Activated naive CD4-positive, alpha-beta T cell treated with anti-CD3 and anti-CD28 coated beads for 36 hours (primary cell): ENCODE measurements at regions of chr9 and their contacts with region 1.

Region 1: GRCh38 chr9:75088260-75088905 is at the start of gene OSTF1:
- DNase-seq: peak; percentile 93
- H3K4me3 Mint-ChIP-seq: peak within 1 kb of the TSS; percentile 95
- H3K27ac Mint-ChIP-seq: peak within 1 kb of the TSS; percentile 94
- H3K4me1 Mint-ChIP-seq: peaks cover 61% of the 10 kb centered on the region
- H3K27me3 Mint-ChIP-seq: no peaks in the 10 kb centered on the region
- total RNA-seq, gene OSTF1: 102 to 104 TPM

Region 2: GRCh38 chr9:73149371-73150067 is 1938.9 kb before region 1 on chr9:
- CTCF ChIA-PET with region 1: no interaction called
- intact Hi-C with region 1: loop called (anchors 5 kb)
- DNase-seq: peak; percentile 23
- H3K4me3 Mint-ChIP-seq: peak overlapping the region; percentile 28
- H3K27ac Mint-ChIP-seq: peak overlapping the region; percentile 79
- H3K4me1 Mint-ChIP-seq: peaks cover 55% of the 10 kb centered on the region
- H3K27me3 Mint-ChIP-seq: no peaks in the 10 kb centered on the region

Region 3: DNA sequence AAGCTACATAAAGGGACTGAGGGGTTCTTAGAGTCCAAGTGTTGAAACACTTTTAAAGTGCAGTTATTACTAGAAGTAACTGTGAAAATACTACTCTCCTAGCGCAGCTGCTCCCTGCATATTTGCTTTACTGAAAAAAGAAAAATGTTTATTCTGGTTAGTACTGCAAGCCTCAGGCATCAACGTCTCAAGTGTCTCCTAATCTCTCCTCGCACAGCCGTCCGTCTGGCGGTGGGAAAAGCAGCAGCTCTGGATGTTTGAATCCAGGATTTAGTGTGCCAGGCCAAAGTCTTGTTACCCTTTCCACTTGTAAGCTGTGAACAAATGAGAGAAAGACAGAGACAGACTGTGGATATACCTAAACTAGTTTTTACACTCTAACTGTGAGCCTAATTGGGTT is 560.2 kb before region 1 on chr9:
- CTCF ChIA-PET with region 1: no interaction called
- intact Hi-C with region 1: no loop called
- DNase-seq: no peak
- H3K4me3 Mint-ChIP-seq: no peak overlapping the region
- H3K27ac Mint-ChIP-seq: no peak overlapping the region
- H3K4me1 Mint-ChIP-seq: no peaks in the 10 kb centered on the region
- H3K27me3 Mint-ChIP-seq: peaks cover 3% of the 10 kb centered on the region

Region 4: DNA sequence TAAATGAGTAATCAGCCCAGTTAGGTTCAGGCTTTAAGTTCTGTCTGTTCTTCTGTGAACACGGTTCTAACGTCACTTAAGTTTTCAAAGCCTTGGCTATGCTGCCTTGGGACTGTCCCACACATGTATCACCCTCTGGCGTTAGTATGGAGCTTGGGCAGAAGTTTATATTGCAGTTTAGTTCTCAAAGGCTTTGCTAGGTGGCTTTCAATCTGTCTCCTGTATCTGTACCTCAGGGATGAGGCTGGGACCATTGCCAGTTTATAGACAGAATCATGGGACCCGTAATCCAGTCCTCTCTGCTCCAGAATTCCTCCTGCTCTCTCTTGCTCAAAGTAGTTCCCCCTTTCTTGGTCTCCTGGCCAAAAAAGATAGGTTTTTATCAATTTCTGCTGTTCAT is 147.8 kb before region 1 on chr9:
- CTCF ChIA-PET with region 1: no interaction called
- intact Hi-C with region 1: no loop called
- DNase-seq: no peak
- H3K4me3 Mint-ChIP-seq: no peak overlapping the region
- H3K27ac Mint-ChIP-seq: no peak overlapping the region
- H3K4me1 Mint-ChIP-seq: peaks cover 9% of the 10 kb centered on the region
- H3K27me3 Mint-ChIP-seq: no peaks in the 10 kb centered on the region

Region 5: GRCh38 chr9:75071530-75072124 is 16.8 kb before region 1 on chr9:
- CTCF ChIA-PET with region 1: interaction called, 7 read pairs
- intact Hi-C with region 1: loop called (anchors 1 kb)
- DNase-seq: peak; percentile 90
- H3K4me3 Mint-ChIP-seq: peak overlapping the region; percentile 0
- H3K27ac Mint-ChIP-seq: peak overlapping the region; percentile 79
- H3K4me1 Mint-ChIP-seq: peaks cover 41% of the 10 kb centered on the region
- H3K27me3 Mint-ChIP-seq: no peaks in the 10 kb centered on the region

Region 6: DNA sequence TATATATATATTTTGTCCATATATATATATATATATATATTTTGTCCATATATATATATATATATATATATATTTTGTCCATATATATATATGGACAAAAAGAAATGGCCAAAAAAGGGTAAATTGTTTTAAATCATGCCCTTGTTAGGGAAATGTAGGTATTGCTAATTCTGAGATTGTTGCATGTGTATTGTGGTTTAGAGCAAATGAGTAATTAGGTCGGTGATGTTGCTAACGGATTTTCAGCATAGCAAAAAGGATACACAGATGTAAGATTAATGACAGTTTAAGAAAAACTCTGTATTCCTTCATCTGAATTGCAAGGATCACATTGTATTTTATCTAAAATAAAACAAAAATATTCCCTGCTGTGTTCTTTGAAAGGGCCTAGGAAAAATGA is 40.2 kb after region 1 on chr9:
- CTCF ChIA-PET with region 1: interaction called, 4 read pairs
- intact Hi-C with region 1: loop called (anchors 2 kb)
- DNase-seq: no peak
- H3K4me3 Mint-ChIP-seq: no peak overlapping the region
- H3K27ac Mint-ChIP-seq: no peak overlapping the region
- H3K4me1 Mint-ChIP-seq: peaks cover 43% of the 10 kb centered on the region
- H3K27me3 Mint-ChIP-seq: no peaks in the 10 kb centered on the region

Region 7: GRCh38 chr9:75238311-75238978 is 150.1 kb after region 1 on chr9:
- CTCF ChIA-PET with region 1: interaction called, 5 read pairs
- intact Hi-C with region 1: loop called (anchors 2 kb)
- DNase-seq: peak; percentile 58
- H3K4me3 Mint-ChIP-seq: no peak overlapping the region
- H3K27ac Mint-ChIP-seq: no peak overlapping the region
- H3K4me1 Mint-ChIP-seq: no peaks in the 10 kb centered on the region
- H3K27me3 Mint-ChIP-seq: no peaks in the 10 kb centered on the region